CD8-positive, alpha-beta T cell (primary cell): ENCODE measurements at regions of chr7 and their contacts with region 1.

Region 1: DNA sequence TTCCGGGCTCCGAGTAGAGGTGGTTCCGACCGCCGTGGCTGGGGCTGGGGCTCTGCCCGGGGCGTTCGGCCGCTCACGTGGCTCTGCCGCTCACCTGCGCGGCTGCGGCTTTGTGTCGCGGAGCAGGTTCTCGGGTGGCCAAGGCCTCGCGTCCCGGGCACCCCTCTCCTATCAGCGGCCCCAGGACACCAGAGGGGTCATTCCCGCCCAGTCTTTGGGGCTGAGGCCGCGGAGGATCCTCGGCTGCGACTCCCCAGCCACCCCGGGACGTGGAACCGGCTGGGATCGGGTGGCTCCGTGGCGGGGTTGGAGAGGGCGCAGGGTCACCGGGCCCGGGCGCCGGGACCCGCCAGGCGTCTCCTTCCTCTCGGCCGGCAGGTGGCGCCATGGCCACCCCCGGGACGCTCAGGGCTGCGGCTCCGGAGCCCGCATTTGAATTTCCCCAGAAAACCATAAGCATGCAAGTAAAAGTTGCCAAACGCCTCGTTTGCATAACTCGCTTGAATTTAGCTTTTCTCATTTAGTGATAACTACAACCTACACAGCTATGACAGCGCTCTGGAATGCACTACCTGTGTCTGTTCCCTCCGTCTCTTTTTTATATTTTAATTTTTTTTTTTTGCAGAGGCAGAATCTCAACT is 1.2 kb downstream of the COL26A1 start:
- DNase-seq: peak; percentile 46 to 85 (median 66)
- ATAC-seq: peak; percentile 92
- H3K4me3 ChIP-seq: peak overlapping the region; percentile 37 to 58
- H3K4me3 Mint-ChIP-seq: peak overlapping the region; percentile 61
- H3K27ac ChIP-seq: no peak overlapping the region
- H3K27ac Mint-ChIP-seq: no peak overlapping the region
- H3K4me1 ChIP-seq: peaks cover 3% of the 10 kb centered on the region
- H3K4me1 Mint-ChIP-seq: peaks cover 3% of the 10 kb centered on the region
- H3K27me3 ChIP-seq: peaks cover 6 to 9% of the 10 kb centered on the region in 2 experiments
- H3K27me3 Mint-ChIP-seq: peaks cover 15% of the 10 kb centered on the region
- CTCF ChIP-seq: peak; percentile 89

Region 2: GRCh38 chr7:101373812-101374614 is 10.2 kb after region 1 on chr7:
- CTCF ChIA-PET with region 1: interaction called, 22 read pairs
- POLR2A ChIA-PET with region 1: no interaction called
- intact Hi-C with region 1: no loop called
- DNase-seq: no peak
- ATAC-seq: no peak
- H3K4me3 ChIP-seq: no peak overlapping the region
- H3K4me3 Mint-ChIP-seq: no peak overlapping the region
- H3K27ac ChIP-seq: no peak overlapping the region
- H3K27ac Mint-ChIP-seq: no peak overlapping the region
- H3K4me1 ChIP-seq: peaks cover 11% of the 10 kb centered on the region
- H3K4me1 Mint-ChIP-seq: peaks cover 8% of the 10 kb centered on the region
- H3K27me3 ChIP-seq: no peaks in the 10 kb centered on the region
- H3K27me3 Mint-ChIP-seq: peaks cover 10% of the 10 kb centered on the region
- CTCF ChIP-seq: no peak

Region 3: DNA sequence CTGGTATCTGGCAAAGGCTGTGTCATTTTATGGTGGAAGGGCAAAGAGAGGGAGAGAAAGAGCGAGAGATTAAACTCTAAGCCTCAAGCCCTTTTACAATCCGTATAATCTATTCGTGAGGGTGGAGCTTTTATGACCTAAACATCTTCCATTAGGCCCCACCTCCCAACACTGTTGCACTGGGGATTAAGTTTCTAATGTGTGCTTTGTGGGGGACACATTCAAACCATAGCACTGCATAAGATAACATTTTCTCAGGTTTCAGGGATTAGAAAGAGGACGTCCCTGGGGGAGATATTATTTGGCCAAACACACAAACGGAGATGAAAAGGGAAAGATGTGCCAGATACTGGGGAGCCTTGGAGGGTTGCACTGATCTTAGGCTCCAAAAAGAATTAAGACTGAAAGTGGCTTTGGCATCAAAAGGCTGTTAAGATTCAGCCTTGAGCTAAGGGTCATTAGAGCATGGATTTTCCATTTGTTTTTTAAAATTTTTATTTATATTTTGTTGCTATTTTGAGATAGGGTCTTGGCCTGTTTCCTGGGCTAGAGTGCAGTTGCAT is 17.8 kb after region 1 on chr7:
- CTCF ChIA-PET with region 1: interaction called, 14 read pairs
- POLR2A ChIA-PET with region 1: no interaction called
- intact Hi-C with region 1: no loop called
- DNase-seq: no peak
- ATAC-seq: no peak
- H3K4me3 ChIP-seq: no peak overlapping the region
- H3K4me3 Mint-ChIP-seq: no peak overlapping the region
- H3K27ac ChIP-seq: no peak overlapping the region
- H3K27ac Mint-ChIP-seq: no peak overlapping the region
- H3K4me1 ChIP-seq: peaks cover under 1% of the 10 kb centered on the region
- H3K4me1 Mint-ChIP-seq: peaks cover 2% of the 10 kb centered on the region
- H3K27me3 ChIP-seq: no peaks in the 10 kb centered on the region
- H3K27me3 Mint-ChIP-seq: no peaks in the 10 kb centered on the region
- CTCF ChIP-seq: no peak

Region 4: GRCh38 chr7:101410743-101411507 is 47.1 kb after region 1 on chr7:
- CTCF ChIA-PET with region 1: interaction called, 225 read pairs
- POLR2A ChIA-PET with region 1: interaction called, 5 read pairs
- intact Hi-C with region 1: loop called (anchors 1 to 2 kb)
- DNase-seq: peak in 8 of 9 experiments; percentile 17 to 73 (median 46)
- ATAC-seq: peak; percentile 51
- H3K4me3 ChIP-seq: no peak overlapping the region
- H3K4me3 Mint-ChIP-seq: no peak overlapping the region
- H3K27ac ChIP-seq: no peak overlapping the region
- H3K27ac Mint-ChIP-seq: no peak overlapping the region
- H3K4me1 ChIP-seq: peaks cover 4% of the 10 kb centered on the region
- H3K4me1 Mint-ChIP-seq: peaks cover 5% of the 10 kb centered on the region
- H3K27me3 ChIP-seq: no peaks in the 10 kb centered on the region
- H3K27me3 Mint-ChIP-seq: peaks cover 9% of the 10 kb centered on the region
- CTCF ChIP-seq: peak; percentile 86

Region 5: GRCh38 chr7:101436857-101437576 is 73.2 kb after region 1 on chr7:
- CTCF ChIA-PET with region 1: interaction called, 16 read pairs
- POLR2A ChIA-PET with region 1: no interaction called
- intact Hi-C with region 1: loop called in 1 of 2 experiments (anchors 1 kb)
- DNase-seq: no peak
- ATAC-seq: no peak
- H3K4me3 ChIP-seq: no peak overlapping the region
- H3K4me3 Mint-ChIP-seq: no peak overlapping the region
- H3K27ac ChIP-seq: no peak overlapping the region
- H3K27ac Mint-ChIP-seq: no peak overlapping the region
- H3K4me1 ChIP-seq: no peaks in the 10 kb centered on the region
- H3K4me1 Mint-ChIP-seq: no peaks in the 10 kb centered on the region
- H3K27me3 ChIP-seq: peaks cover 0 to 8% of the 10 kb centered on the region in 2 experiments
- H3K27me3 Mint-ChIP-seq: peaks cover 24% of the 10 kb centered on the region
- CTCF ChIP-seq: no peak

Region 6: GRCh38 chr7:101507791-101508252 is 144.0 kb after region 1 on chr7:
- CTCF ChIA-PET with region 1: interaction called, 4 read pairs
- POLR2A ChIA-PET with region 1: no interaction called
- intact Hi-C with region 1: loop called (anchors 1 to 2 kb)
- DNase-seq: peak in 4 of 9 experiments; percentile 7 to 51 (median 20)
- ATAC-seq: no peak
- H3K4me3 ChIP-seq: no peak overlapping the region
- H3K4me3 Mint-ChIP-seq: no peak overlapping the region
- H3K27ac ChIP-seq: no peak overlapping the region
- H3K27ac Mint-ChIP-seq: no peak overlapping the region
- H3K4me1 ChIP-seq: peaks cover 7% of the 10 kb centered on the region
- H3K4me1 Mint-ChIP-seq: peaks cover 9% of the 10 kb centered on the region
- H3K27me3 ChIP-seq: no peaks in the 10 kb centered on the region
- H3K27me3 Mint-ChIP-seq: peaks cover 23% of the 10 kb centered on the region
- CTCF ChIP-seq: peak; percentile 22